Esophagus squamous epithelium (tissue), 5 donors: ENCODE measurements at regions of chr12 and their contacts with region 1.

Region 1: DNA sequence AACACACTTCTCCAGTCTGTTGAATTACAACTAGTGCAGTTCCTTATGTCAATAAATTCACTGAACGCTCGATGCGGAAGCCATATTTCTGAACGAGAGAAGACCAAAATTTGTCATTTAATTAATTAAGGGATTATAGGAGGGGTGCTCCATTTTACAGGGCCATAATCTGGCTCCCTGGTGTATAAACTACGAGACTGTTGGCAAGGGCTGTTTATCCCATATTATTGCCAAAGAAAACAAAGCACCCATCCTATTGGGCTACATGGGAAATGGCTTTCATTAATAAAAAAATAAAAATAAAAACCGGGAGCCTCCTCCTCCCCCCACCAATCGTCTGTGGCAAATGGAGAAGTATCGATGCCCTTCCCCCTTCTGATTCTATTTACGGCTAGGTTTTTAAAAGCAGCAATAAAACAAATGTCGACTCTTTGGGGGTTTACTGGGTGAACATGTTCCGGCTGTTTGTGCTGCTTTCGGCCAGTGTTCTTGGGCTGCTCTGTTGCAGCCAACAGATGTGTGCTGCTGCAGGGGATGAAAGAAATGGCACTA is 24.8 kb downstream of the ATF7 start:
- DNase-seq: no peak
- H3K4me3 ChIP-seq: peak overlapping the region in 2 of 4 donors; percentile 8 to 9
- H3K27ac ChIP-seq: peak overlapping the region in 1 of 4 donors; percentile 65
- H3K4me1 ChIP-seq: peaks cover 0 to 52% (median 17%) of the 10 kb centered on the region in 3 donors
- H3K27me3 ChIP-seq: no peaks in the 10 kb centered on the region
- CTCF ChIP-seq: no peak
- POLR2A ChIP-seq: no peak

Region 2: GRCh38 chr12:53551889-53552291 is 49.5 kb before region 1 on chr12:
- intact Hi-C with region 1: loop called (anchors 10 kb)
- DNase-seq: no peak
- H3K4me3 ChIP-seq: no peak overlapping the region
- H3K27ac ChIP-seq: no peak overlapping the region
- H3K4me1 ChIP-seq: peaks cover 0 to 7% (median 0%) of the 10 kb centered on the region in 3 donors
- H3K27me3 ChIP-seq: no peaks in the 10 kb centered on the region
- CTCF ChIP-seq: no peak
- POLR2A ChIP-seq: no peak

Region 3: GRCh38 chr12:53684654-53685220 is 83.4 kb after region 1 on chr12:
- intact Hi-C with region 1: no loop called
- DNase-seq: no peak
- H3K4me3 ChIP-seq: no peak overlapping the region
- H3K27ac ChIP-seq: no peak overlapping the region
- H3K4me1 ChIP-seq: no peaks in the 10 kb centered on the region
- H3K27me3 ChIP-seq: no peaks in the 10 kb centered on the region
- CTCF ChIP-seq: no peak
- POLR2A ChIP-seq: no peak

Region 4: GRCh38 chr12:53694756-53695151 is 93.4 kb after region 1 on chr12:
- intact Hi-C with region 1: no loop called
- DNase-seq: no peak
- H3K4me3 ChIP-seq: peak overlapping the region in 1 of 4 donors; percentile 60
- H3K27ac ChIP-seq: no peak overlapping the region
- H3K4me1 ChIP-seq: peaks cover 12 to 29% (median 23%) of the 10 kb centered on the region in 3 donors
- H3K27me3 ChIP-seq: peaks cover 0 to 90% (median 18%) of the 10 kb centered on the region in 4 donors
- CTCF ChIP-seq: no peak
- POLR2A ChIP-seq: no peak